PC-9 (cell line): ENCODE measurements at regions of chr17 and their contacts with region 1.

Region 1: DNA sequence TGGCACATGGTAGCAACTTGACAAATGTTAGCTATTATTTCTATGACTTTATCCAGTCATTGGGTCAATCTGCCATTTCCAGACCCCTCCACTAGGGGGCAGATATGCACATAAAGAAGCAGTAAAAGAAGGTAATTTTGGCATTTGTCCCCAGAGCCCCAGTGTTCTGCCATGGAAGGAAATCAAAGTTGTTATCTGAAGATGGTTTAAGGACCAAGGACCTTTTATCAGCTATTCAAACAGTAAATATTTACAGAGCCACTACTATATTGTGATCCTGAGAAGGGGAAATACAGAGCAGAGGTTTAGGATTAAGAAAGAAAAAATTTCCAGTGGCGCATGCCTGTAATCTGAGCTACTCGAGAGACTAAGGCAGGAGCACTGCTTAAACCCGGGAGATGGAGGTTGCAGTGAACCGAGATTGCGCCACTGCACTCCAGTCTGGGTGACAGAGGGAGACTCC is 20.0 kb downstream of the TRAF4 start:
- DNase-seq: peak in 1 of 2 experiments; percentile 62
- H3K4me3 ChIP-seq: no peak overlapping the region
- H3K27ac ChIP-seq: no peak overlapping the region
- H3K4me1 ChIP-seq: peaks cover 15% of the 10 kb centered on the region
- H3K27me3 ChIP-seq: no peaks in the 10 kb centered on the region
- CTCF ChIP-seq: peak; percentile 95

Region 2: GRCh38 chr17:28290703-28291102 is 473.1 kb before region 1 on chr17:
- CTCF ChIA-PET with region 1: no interaction called
- POLR2A ChIA-PET with region 1: interaction called, 17 read pairs
- intact Hi-C with region 1: no loop called
- DNase-seq: no peak
- H3K4me3 ChIP-seq: no peak overlapping the region
- H3K27ac ChIP-seq: no peak overlapping the region
- H3K4me1 ChIP-seq: peaks cover under 1% of the 10 kb centered on the region; the same call in 1 of the 2 replicates
- H3K27me3 ChIP-seq: no peaks in the 10 kb centered on the region
- CTCF ChIP-seq: no peak

Region 3: GRCh38 chr17:28612936-28613872 is 150.6 kb before region 1 on chr17:
- CTCF ChIA-PET with region 1: no interaction called
- POLR2A ChIA-PET with region 1: no interaction called
- intact Hi-C with region 1: no loop called
- DNase-seq: peak in 1 of 2 experiments; percentile 25
- H3K4me3 ChIP-seq: no peak overlapping the region
- H3K27ac ChIP-seq: no peak overlapping the region
- H3K4me1 ChIP-seq: no peaks in the 10 kb centered on the region
- H3K27me3 ChIP-seq: no peaks in the 10 kb centered on the region
- CTCF ChIP-seq: peak; percentile 66

Region 4: GRCh38 chr17:28661635-28662537 is 101.9 kb before region 1 on chr17 and contains the starts of genes SDF2 and SUPT6H:
- CTCF ChIA-PET with region 1: no interaction called
- POLR2A ChIA-PET with region 1: no interaction called
- intact Hi-C with region 1: no loop called
- DNase-seq: peak; percentile 79 to 84
- H3K4me3 ChIP-seq: peak within 1 kb of the TSS; percentile 80
- H3K27ac ChIP-seq: peak within 1 kb of the TSS; percentile 78
- H3K4me1 ChIP-seq: peaks cover 17% of the 10 kb centered on the region
- H3K27me3 ChIP-seq: no peaks in the 10 kb centered on the region
- CTCF ChIP-seq: no peak
- total RNA-seq, gene SDF2: 38.9 and 43.7 TPM in 2 replicates
- total RNA-seq, gene SUPT6H: 46.7 and 63.3 TPM in 2 replicates

Region 5: DNA sequence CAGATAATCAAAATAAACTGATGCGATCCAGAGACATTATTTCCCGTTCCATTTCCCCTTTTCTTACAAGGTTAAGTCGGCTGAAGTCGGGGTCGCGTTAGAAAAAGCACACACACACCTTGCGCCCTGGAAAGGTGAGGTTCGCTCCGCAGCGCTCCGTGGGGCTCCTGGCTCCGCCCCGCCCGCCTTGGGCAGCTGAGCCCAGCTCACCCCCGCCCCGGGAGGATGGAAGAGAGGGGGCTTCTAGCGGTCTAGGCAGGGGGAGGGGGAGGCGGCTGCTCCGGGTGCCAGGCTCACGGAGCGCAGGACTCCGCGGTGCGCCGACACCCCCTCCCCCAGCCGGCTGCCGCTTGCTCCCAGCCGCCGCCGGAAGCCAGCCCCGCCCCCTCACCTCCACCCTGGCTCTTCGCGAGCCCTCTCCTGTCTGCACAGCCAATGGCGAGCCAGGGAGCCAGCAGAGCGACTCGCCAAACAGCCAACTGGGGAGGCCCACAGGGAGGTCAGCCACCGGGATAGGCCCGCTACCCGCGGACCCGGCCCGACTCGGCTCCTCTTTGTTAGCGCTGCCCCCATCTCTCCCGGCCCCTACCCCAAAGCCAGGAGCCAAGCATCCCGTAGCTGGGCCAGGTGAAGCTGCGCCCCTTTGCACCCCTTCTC is 48.4 kb after region 1 on chr17:
- CTCF ChIA-PET with region 1: interaction called, 3 read pairs
- POLR2A ChIA-PET with region 1: interaction called, 6 read pairs
- intact Hi-C with region 1: loop called (anchors 5 kb)
- DNase-seq: peak; percentile 90 to 96
- H3K4me3 ChIP-seq: peak overlapping the region; percentile 85
- H3K27ac ChIP-seq: peak overlapping the region; percentile 95
- H3K4me1 ChIP-seq: peaks cover 47% of the 10 kb centered on the region
- H3K27me3 ChIP-seq: no peaks in the 10 kb centered on the region
- CTCF ChIP-seq: no peak

Region 6: DNA sequence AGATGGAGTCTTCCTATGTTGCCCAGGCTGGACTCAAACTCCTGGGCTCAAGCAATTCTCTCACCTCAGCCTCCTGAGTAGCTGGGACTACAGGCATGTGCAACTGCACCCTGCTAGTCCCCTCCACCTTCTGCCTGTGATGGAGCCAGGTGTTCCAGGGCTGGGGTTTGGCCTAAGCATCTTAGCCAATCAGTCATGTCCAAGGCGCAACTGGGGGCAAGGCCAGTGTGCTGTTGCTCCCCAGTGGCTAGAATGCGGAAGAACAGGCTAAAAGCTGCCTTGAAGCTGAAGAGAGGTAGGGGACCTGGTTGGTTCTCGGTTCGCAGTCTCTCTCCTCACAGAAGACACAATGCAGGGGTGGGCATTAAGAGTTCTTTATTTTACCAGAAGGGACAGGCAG is 115.1 kb after region 1 on chr17:
- CTCF ChIA-PET with region 1: interaction called, 12 read pairs
- POLR2A ChIA-PET with region 1: no interaction called
- intact Hi-C with region 1: loop called (anchors 1 kb)
- DNase-seq: peak; percentile 42 to 60
- H3K4me3 ChIP-seq: no peak overlapping the region
- H3K27ac ChIP-seq: no peak overlapping the region
- H3K4me1 ChIP-seq: peaks cover 9% of the 10 kb centered on the region; the same call in 1 of the 2 replicates
- H3K27me3 ChIP-seq: no peaks in the 10 kb centered on the region
- CTCF ChIP-seq: peak; percentile 68

Region 7: GRCh38 chr17:28902819-28903545 is 139.1 kb after region 1 on chr17 and contains the start of gene DHRS13:
- CTCF ChIA-PET with region 1: interaction called, 4 read pairs
- POLR2A ChIA-PET with region 1: no interaction called
- intact Hi-C with region 1: loop called (anchors 5 kb)
- DNase-seq: peak; percentile 85 to 94
- H3K4me3 ChIP-seq: peak within 1 kb of the TSS; percentile 73
- H3K27ac ChIP-seq: no peak within 1 kb of the TSS
- H3K4me1 ChIP-seq: peaks cover 15% of the 10 kb centered on the region
- H3K27me3 ChIP-seq: no peaks in the 10 kb centered on the region
- CTCF ChIP-seq: peak; percentile 88
- total RNA-seq, gene DHRS13: 15.8 and 17.5 TPM in 2 replicates